ENCODE measurements at regions of chr21 and their contacts with region 1.

Region 1: GRCh38 chr21:42760951-42761680 is 107.7 kb downstream of the PDE9A start:
- DNase-seq: no peak
- ATAC-seq: peak; percentile 36
- H3K4me3 ChIP-seq: no peak overlapping the region
- H3K4me3 Mint-ChIP-seq: no peak overlapping the region
- H3K27ac ChIP-seq: no peak overlapping the region
- H3K27ac Mint-ChIP-seq: peak overlapping the region in 2 of 9 donors; percentile 16 to 31
- H3K4me1 ChIP-seq: no peaks in the 10 kb centered on the region
- H3K4me1 Mint-ChIP-seq: peaks cover 0 to 6% (median 0%) of the 10 kb centered on the region in 7 donors
- H3K27me3 ChIP-seq: no peaks in the 10 kb centered on the region
- H3K27me3 Mint-ChIP-seq: no peaks in the 10 kb centered on the region

Region 2: DNA sequence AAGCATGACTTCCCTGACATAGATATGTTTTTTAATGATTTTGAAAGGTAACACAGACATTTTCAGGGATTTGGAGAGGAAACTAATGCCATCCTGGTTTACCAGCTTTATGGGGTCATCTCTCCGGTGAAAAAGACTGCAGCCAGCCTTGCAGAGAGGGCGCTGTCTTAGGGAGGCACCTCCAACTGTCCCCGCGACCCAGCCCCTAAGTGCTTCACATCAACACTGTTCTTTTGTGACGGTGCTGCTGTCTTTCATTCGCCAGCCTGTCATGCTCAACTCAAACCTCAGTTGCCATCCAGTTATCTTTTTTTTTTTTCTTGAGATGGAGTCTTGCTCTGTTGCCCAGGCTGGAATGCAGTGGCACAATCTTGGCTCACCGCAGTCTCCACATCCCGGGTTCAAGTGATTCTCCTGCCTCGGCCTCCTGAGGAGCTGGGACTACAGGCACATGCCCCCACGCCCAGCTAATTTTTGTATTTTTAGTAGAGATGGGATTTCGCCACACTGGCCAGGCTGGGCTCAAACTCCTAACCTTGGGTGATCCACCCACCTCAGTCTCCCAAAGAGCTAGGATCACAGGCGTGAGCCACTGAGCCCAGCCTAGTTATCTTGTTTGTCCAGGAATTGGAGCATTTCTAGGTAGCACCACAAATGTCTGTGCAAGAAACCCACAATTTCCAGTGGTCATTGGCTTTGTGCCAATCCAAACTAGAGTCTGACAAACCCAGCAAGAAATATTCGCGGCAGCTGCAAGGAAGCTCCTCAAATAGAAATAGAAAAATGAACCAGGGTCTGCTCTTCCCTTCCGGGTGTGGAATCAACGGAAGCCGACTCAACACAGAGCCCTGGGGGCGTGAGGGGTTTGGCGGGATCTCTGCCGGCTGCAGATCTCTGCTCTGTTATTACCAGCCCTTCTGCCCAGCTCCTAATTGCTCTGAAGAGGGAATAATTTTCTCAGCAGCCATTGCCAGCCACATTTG is 83.5 kb before region 1 on chr21:
- CTCF ChIA-PET with region 1: no interaction called
- POLR2A ChIA-PET with region 1: no interaction called
- intact Hi-C with region 1: no loop called
- DNase-seq: no peak
- ATAC-seq: no peak
- H3K4me3 ChIP-seq: no peak overlapping the region
- H3K4me3 Mint-ChIP-seq: peak overlapping the region in 5 of 10 donors; percentile 7 to 32 (median 20)
- H3K27ac ChIP-seq: no peak overlapping the region
- H3K27ac Mint-ChIP-seq: peak overlapping the region in 8 of 9 donors; percentile 38 to 76 (median 55)
- H3K4me1 ChIP-seq: peaks cover 0 to 26% of the 10 kb centered on the region in 2 donors
- H3K4me1 Mint-ChIP-seq: peaks cover 21 to 59% (median 42%) of the 10 kb centered on the region in 7 donors
- H3K27me3 ChIP-seq: no peaks in the 10 kb centered on the region
- H3K27me3 Mint-ChIP-seq: peaks cover 0 to 5% (median 0%) of the 10 kb centered on the region in 5 donors

Region 3: GRCh38 chr21:42711667-42712066 is 49.4 kb before region 1 on chr21:
- CTCF ChIA-PET with region 1: no interaction called
- POLR2A ChIA-PET with region 1: no interaction called
- intact Hi-C with region 1: loop called in 1 of 2 experiments (anchors 5 kb)
- DNase-seq: no peak
- ATAC-seq: no peak
- H3K4me3 ChIP-seq: no peak overlapping the region
- H3K4me3 Mint-ChIP-seq: no peak overlapping the region
- H3K27ac ChIP-seq: no peak overlapping the region
- H3K27ac Mint-ChIP-seq: peak overlapping the region in 2 of 9 donors; percentile 11 to 82
- H3K4me1 ChIP-seq: no peaks in the 10 kb centered on the region
- H3K4me1 Mint-ChIP-seq: peaks cover 0 to 4% (median 0%) of the 10 kb centered on the region in 7 donors
- H3K27me3 ChIP-seq: no peaks in the 10 kb centered on the region
- H3K27me3 Mint-ChIP-seq: no peaks in the 10 kb centered on the region

Region 4: GRCh38 chr21:42737951-42738590 is 23.0 kb before region 1 on chr21:
- CTCF ChIA-PET with region 1: no interaction called
- POLR2A ChIA-PET with region 1: no interaction called
- intact Hi-C with region 1: no loop called
- DNase-seq: peak in 7 of 9 donors; percentile 39 to 76 (median 61)
- ATAC-seq: peak; percentile 88
- H3K4me3 ChIP-seq: peak overlapping the region; percentile 43
- H3K4me3 Mint-ChIP-seq: peak overlapping the region in 9 of 10 donors; percentile 70 to 86 (median 80)
- H3K27ac ChIP-seq: peak overlapping the region; percentile 78
- H3K27ac Mint-ChIP-seq: peak overlapping the region; percentile 68 to 100 (median 99)
- H3K4me1 ChIP-seq: peaks cover 13 to 33% of the 10 kb centered on the region in 2 donors
- H3K4me1 Mint-ChIP-seq: peaks cover 9 to 61% (median 53%) of the 10 kb centered on the region in 7 donors
- H3K27me3 ChIP-seq: no peaks in the 10 kb centered on the region
- H3K27me3 Mint-ChIP-seq: no peaks in the 10 kb centered on the region

Measured in naive thymus-derived CD4-positive, alpha-beta T cell (primary cell).